ENCODE measurements at regions of chr2 and their contacts with region 1.

Region 1: DNA sequence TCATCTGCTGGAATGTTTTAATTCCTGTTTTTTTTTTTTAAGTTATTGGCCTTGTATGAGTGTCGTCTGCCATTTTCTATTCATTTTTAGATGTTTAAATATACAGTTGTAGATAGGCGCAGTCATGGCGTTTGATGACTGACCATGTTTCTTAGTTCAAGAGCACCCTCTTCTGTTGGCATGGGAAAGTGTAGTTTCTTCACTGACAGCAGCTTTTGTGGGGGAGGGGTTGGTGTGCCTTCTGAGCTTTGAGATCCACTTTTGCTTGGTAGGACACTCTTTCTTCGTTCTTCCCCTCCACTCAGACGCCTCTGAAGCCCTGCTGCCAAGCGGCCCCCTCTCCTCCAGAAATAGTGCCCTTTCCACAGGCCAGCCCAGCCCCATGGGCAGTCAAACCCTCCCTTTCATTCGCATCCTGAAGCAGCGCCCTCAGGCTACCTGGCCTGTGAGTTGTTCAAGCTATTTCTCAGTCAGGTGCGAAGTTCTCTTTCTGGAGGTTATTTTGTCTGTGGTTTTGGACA is 492.0 kb downstream of the TNS1 start:
- DNase-seq: peak; percentile 93
- ATAC-seq: peak; percentile 93
- H3K4me3 ChIP-seq: no peak overlapping the region
- H3K27ac ChIP-seq: peak overlapping the region; percentile 87
- H3K4me1 ChIP-seq: peaks cover 17% of the 10 kb centered on the region
- H3K27me3 ChIP-seq: no peaks in the 10 kb centered on the region
- CTCF ChIP-seq: peak; percentile 91
- POLR2A ChIP-seq: 0 out of 2 replicates have a peak, but pooled peaks have one; percentile 28
- RAD21 ChIP-seq: peak; percentile 97

Region 2: GRCh38 chr2:216698895-216699294 is 811.9 kb before region 1 on chr2:
- CTCF ChIA-PET with region 1: interaction called, 8 read pairs
- POLR2A ChIA-PET with region 1: interaction called, 9 read pairs
- dilution Hi-C with region 1: loop called (anchors 25 kb)
- in situ Hi-C with region 1: loop called (anchors 5 kb)
- intact Hi-C with region 1: loop called (anchors 1 kb)
- DNase-seq: peak; percentile 84
- ATAC-seq: peak; percentile 43
- H3K4me3 ChIP-seq: no peak overlapping the region
- H3K27ac ChIP-seq: peak overlapping the region; percentile 68
- H3K4me1 ChIP-seq: peaks cover 28% of the 10 kb centered on the region
- H3K27me3 ChIP-seq: no peaks in the 10 kb centered on the region
- CTCF ChIP-seq: peak; percentile 81
- POLR2A ChIP-seq: no peak
- RAD21 ChIP-seq: peak; percentile 90

Region 3: DNA sequence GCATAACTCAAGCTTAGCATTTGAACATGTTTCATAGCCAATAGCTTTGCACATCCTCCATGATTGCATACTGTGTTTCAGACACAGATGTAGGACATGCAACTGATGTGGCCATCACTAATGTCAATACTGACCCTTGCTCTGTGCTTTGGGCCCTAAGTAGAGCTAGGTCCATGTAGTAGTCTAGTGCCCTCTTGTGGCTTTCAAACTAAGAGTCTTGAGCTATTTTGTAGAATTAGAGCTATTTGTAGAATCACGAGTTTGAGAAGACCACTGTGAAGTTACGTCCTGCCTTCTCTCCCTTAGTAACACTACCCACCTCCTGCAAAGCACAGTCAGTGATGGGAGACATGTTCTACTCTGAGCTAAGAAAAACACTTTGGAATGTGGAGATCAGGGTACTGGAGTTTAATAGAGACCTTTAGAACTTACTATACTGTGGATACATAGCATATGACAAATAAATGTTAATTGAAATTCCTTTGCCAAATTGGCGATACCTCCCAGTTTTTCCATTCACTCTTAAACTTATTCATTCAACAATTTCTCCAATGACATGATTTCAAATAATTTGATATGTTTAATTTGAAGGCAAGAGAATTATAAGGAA is 344.5 kb before region 1 on chr2:
- CTCF ChIA-PET with region 1: interaction called, 9 read pairs
- POLR2A ChIA-PET with region 1: no interaction called
- dilution Hi-C with region 1: no loop called
- in situ Hi-C with region 1: loop called (anchors 10 kb)
- intact Hi-C with region 1: loop called (anchors 1 kb)
- DNase-seq: peak; percentile 73
- ATAC-seq: peak; percentile 49
- H3K4me3 ChIP-seq: no peak overlapping the region
- H3K27ac ChIP-seq: peak overlapping the region; percentile 65
- H3K4me1 ChIP-seq: peaks cover 19% of the 10 kb centered on the region
- H3K27me3 ChIP-seq: no peaks in the 10 kb centered on the region
- CTCF ChIP-seq: peak; percentile 66
- POLR2A ChIP-seq: no peak
- RAD21 ChIP-seq: peak; percentile 85

Region 4: GRCh38 chr2:217331523-217332139 is 179.2 kb before region 1 on chr2:
- CTCF ChIA-PET with region 1: no interaction called
- POLR2A ChIA-PET with region 1: no interaction called
- dilution Hi-C with region 1: no loop called
- in situ Hi-C with region 1: no loop called
- intact Hi-C with region 1: loop called (anchors 2 kb)
- DNase-seq: peak; percentile 82
- ATAC-seq: peak; percentile 89
- H3K4me3 ChIP-seq: no peak overlapping the region
- H3K27ac ChIP-seq: peak overlapping the region; percentile 95
- H3K4me1 ChIP-seq: peaks cover 18% of the 10 kb centered on the region
- H3K27me3 ChIP-seq: no peaks in the 10 kb centered on the region
- CTCF ChIP-seq: no peak
- POLR2A ChIP-seq: no peak
- RAD21 ChIP-seq: no peak

Region 5: DNA sequence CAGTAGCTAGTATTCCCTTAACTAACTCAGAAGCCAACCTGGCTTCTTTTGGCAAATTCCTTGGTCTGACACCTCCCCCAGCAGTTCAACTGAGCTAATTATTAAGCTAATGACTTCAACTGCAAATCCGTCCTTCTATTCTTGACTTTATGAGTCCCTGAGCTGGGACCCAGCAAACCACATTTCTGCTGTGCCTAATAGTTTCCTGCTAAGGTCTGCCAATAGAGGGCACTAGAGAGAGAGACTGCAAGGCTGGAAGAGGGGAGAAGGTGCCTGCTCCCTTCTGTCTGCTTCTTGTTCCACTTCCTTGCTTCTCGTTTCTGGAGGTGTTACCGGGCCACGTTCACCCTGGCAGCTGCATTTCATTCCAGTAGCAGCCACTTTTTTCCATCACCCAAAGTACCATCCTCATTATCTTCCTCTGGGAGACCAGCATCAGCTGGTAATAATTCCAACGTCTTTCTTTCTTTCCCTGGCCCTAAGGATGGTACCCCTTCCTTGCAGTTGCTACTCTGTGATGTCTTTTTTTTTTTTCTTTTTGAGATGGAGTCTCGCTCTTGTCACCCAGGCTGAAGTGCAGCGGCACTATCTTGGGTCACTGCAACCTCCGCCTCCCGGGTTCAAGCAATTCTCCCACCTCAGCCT is 140.0 kb after region 1 on chr2:
- CTCF ChIA-PET with region 1: no interaction called
- POLR2A ChIA-PET with region 1: no interaction called
- dilution Hi-C with region 1: no loop called
- in situ Hi-C with region 1: no loop called
- intact Hi-C with region 1: loop called (anchors 2 kb)
- DNase-seq: peak; percentile 66
- ATAC-seq: peak; percentile 68
- H3K4me3 ChIP-seq: no peak overlapping the region
- H3K27ac ChIP-seq: no peak overlapping the region
- H3K4me1 ChIP-seq: peaks cover 9% of the 10 kb centered on the region
- H3K27me3 ChIP-seq: no peaks in the 10 kb centered on the region
- CTCF ChIP-seq: peak; percentile 69
- POLR2A ChIP-seq: no peak
- RAD21 ChIP-seq: peak; percentile 67